Naive thymus-derived CD4-positive, alpha-beta T cell (primary cell): ENCODE measurements at regions of chr1 and their contacts with region 1.

Region 1: GRCh38 chr1:159132271-159132881 is 39.0 kb upstream of the CADM3 start:
- DNase-seq: peak in 8 of 9 donors; percentile 19 to 68 (median 45)
- ATAC-seq: peak; percentile 67
- H3K4me3 ChIP-seq: no peak overlapping the region
- H3K4me3 Mint-ChIP-seq: no peak overlapping the region
- H3K27ac ChIP-seq: no peak overlapping the region
- H3K27ac Mint-ChIP-seq: no peak overlapping the region
- H3K4me1 ChIP-seq: no peaks in the 10 kb centered on the region
- H3K4me1 Mint-ChIP-seq: no peaks in the 10 kb centered on the region
- H3K27me3 ChIP-seq: no peaks in the 10 kb centered on the region
- H3K27me3 Mint-ChIP-seq: peaks cover 0 to 13% (median 9%) of the 10 kb centered on the region in 5 donors

Region 2: GRCh38 chr1:159197561-159198557 is 65.5 kb after region 1 on chr1:
- CTCF ChIA-PET with region 1: no interaction called
- POLR2A ChIA-PET with region 1: no interaction called
- intact Hi-C with region 1: loop called in 1 of 2 experiments (anchors 5 kb)
- DNase-seq: peak in 1 of 9 donors; percentile 43
- ATAC-seq: peak; percentile 68
- H3K4me3 ChIP-seq: no peak overlapping the region
- H3K4me3 Mint-ChIP-seq: no peak overlapping the region
- H3K27ac ChIP-seq: no peak overlapping the region
- H3K27ac Mint-ChIP-seq: no peak overlapping the region
- H3K4me1 ChIP-seq: no peaks in the 10 kb centered on the region
- H3K4me1 Mint-ChIP-seq: peaks cover 0 to 13% (median 5%) of the 10 kb centered on the region in 7 donors
- H3K27me3 ChIP-seq: no peaks in the 10 kb centered on the region
- H3K27me3 Mint-ChIP-seq: peaks cover 24 to 77% (median 51%) of the 10 kb centered on the region in 5 donors